ENCODE measurements at regions of chr5 and their contacts with region 1.

Region 1: GRCh38 chr5:172188033-172188892 is at the start of gene STK10:
- DNase-seq: peak; percentile 79 to 95 (median 89)
- ATAC-seq: peak; percentile 75
- H3K4me3 ChIP-seq: peak within 1 kb of the TSS; percentile 74 to 95
- H3K4me3 Mint-ChIP-seq: peak within 1 kb of the TSS; percentile 100
- H3K27ac ChIP-seq: peak within 1 kb of the TSS; percentile 84 to 97
- H3K27ac Mint-ChIP-seq: peak within 1 kb of the TSS; percentile 99
- H3K4me1 ChIP-seq: peaks cover 14% of the 10 kb centered on the region
- H3K4me1 Mint-ChIP-seq: peaks cover 32% of the 10 kb centered on the region
- H3K27me3 ChIP-seq: no peaks in the 10 kb centered on the region
- H3K27me3 Mint-ChIP-seq: no peaks in the 10 kb centered on the region
- CTCF ChIP-seq: peak; percentile 97
- total RNA-seq, gene STK10: 172 to 182 TPM

Region 2: GRCh38 chr5:171387345-171387969 is 800.8 kb before region 1 on chr5 and contains the start of gene NPM1:
- CTCF ChIA-PET with region 1: no interaction called
- POLR2A ChIA-PET with region 1: no interaction called
- intact Hi-C with region 1: loop called (anchors 5 kb)
- DNase-seq: peak; percentile 95 to 100 (median 97)
- ATAC-seq: peak; percentile 88
- H3K4me3 ChIP-seq: peak within 1 kb of the TSS; percentile 92 to 96
- H3K4me3 Mint-ChIP-seq: peak within 1 kb of the TSS; percentile 96
- H3K27ac ChIP-seq: peak within 1 kb of the TSS; percentile 94 to 97
- H3K27ac Mint-ChIP-seq: peak within 1 kb of the TSS; percentile 99
- H3K4me1 ChIP-seq: peaks cover 45% of the 10 kb centered on the region
- H3K4me1 Mint-ChIP-seq: peaks cover 46% of the 10 kb centered on the region
- H3K27me3 ChIP-seq: no peaks in the 10 kb centered on the region
- H3K27me3 Mint-ChIP-seq: peaks cover 3% of the 10 kb centered on the region
- CTCF ChIP-seq: no peak
- total RNA-seq, gene NPM1: 1,297 to 1,299 TPM

Region 3: DNA sequence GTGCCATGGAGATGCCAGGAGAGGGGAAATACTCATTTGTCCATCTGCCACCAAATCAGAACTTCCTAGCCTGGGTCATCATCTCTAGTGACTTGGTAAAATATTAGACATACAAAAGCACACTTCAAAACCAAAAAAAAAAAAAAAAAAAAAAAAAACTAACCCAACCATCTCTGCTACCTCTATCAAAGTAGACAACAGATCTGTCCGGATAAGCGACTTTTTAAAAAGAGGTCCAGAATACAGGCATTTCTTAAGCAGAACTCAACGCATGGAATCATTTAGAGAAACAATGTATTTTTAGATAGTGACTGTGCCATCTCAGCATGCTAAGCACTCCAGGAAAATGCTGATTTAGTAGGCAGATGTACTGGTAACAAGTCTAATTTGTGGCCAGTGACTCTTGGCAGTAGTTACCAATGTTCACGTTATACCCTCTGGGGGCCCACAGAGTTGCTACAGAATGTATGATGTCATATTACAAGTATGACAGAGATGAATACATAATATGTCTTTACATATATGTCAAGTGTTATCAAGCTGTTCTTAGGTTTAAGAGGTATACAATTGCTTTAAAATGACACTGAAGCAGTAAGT is 294.9 kb before region 1 on chr5:
- CTCF ChIA-PET with region 1: no interaction called
- POLR2A ChIA-PET with region 1: no interaction called
- intact Hi-C with region 1: no loop called
- DNase-seq: no peak
- ATAC-seq: no peak
- H3K4me3 ChIP-seq: no peak overlapping the region
- H3K4me3 Mint-ChIP-seq: no peak overlapping the region
- H3K27ac ChIP-seq: no peak overlapping the region
- H3K27ac Mint-ChIP-seq: no peak overlapping the region
- H3K4me1 ChIP-seq: peaks cover 11% of the 10 kb centered on the region
- H3K4me1 Mint-ChIP-seq: peaks cover 17% of the 10 kb centered on the region
- H3K27me3 ChIP-seq: no peaks in the 10 kb centered on the region
- H3K27me3 Mint-ChIP-seq: no peaks in the 10 kb centered on the region
- CTCF ChIP-seq: no peak

Region 4: GRCh38 chr5:172059661-172060100 is 128.6 kb before region 1 on chr5:
- CTCF ChIA-PET with region 1: interaction called, 11 read pairs
- POLR2A ChIA-PET with region 1: no interaction called
- intact Hi-C with region 1: no loop called
- DNase-seq: peak in 2 of 9 experiments; percentile 39 to 54
- ATAC-seq: no peak
- H3K4me3 ChIP-seq: no peak overlapping the region
- H3K4me3 Mint-ChIP-seq: no peak overlapping the region
- H3K27ac ChIP-seq: no peak overlapping the region
- H3K27ac Mint-ChIP-seq: peak overlapping the region; percentile 61
- H3K4me1 ChIP-seq: peaks cover 9% of the 10 kb centered on the region
- H3K4me1 Mint-ChIP-seq: peaks cover 30% of the 10 kb centered on the region
- H3K27me3 ChIP-seq: no peaks in the 10 kb centered on the region
- H3K27me3 Mint-ChIP-seq: no peaks in the 10 kb centered on the region
- CTCF ChIP-seq: peak; percentile 43

Region 5: DNA sequence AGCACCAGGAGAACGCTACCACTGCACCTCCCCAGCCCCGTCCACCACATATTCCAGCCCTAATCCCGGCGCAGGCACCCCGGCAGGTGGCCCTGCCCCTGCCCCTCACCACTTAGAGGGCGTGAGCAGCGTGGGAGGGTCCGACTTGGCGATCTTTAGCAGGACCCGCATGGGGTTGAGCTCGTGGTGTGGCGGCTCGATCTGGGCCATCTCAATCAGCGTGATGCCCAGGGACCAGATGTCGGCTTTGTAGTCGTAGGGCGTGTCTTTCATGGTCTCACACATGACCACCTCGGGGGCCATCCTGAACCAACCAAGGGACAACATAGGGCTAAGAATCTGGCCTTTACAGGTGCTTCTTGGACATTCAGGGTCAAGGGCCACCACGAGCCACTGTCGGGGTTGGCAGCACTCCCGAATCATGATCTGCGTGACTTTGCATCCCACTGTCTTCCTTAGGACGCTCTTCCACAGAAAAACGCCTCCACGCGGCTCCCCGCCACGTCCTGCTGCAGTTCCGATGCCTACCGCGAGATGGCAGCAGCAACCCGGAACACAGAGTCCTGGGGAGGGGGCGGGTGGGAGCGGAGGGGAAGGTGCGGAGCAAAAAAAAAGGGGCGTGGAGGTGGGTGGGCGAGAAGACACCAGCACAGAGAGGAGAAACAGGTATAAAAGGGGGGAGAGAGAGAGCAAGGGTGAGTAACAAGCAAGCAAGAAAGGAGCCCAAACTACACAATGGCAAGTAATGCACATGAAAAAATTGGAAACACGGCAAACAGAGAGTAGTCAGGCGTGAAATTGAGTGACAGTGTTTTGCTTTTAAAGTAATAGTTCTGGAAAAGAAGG is 81.5 kb before region 1 on chr5:
- CTCF ChIA-PET with region 1: interaction called, 197 read pairs
- POLR2A ChIA-PET with region 1: interaction called, 82 read pairs
- intact Hi-C with region 1: loop called (anchors 1 kb)
- DNase-seq: peak; percentile 31 to 81 (median 69)
- ATAC-seq: peak; percentile 42
- H3K4me3 ChIP-seq: no peak overlapping the region
- H3K4me3 Mint-ChIP-seq: peak overlapping the region; percentile 8
- H3K27ac ChIP-seq: peak overlapping the region in 1 of 2 experiments; percentile 51
- H3K27ac Mint-ChIP-seq: peak overlapping the region; percentile 84
- H3K4me1 ChIP-seq: peaks cover 36% of the 10 kb centered on the region
- H3K4me1 Mint-ChIP-seq: peaks cover 48% of the 10 kb centered on the region
- H3K27me3 ChIP-seq: no peaks in the 10 kb centered on the region
- H3K27me3 Mint-ChIP-seq: no peaks in the 10 kb centered on the region
- CTCF ChIP-seq: peak; percentile 98

Region 6: DNA sequence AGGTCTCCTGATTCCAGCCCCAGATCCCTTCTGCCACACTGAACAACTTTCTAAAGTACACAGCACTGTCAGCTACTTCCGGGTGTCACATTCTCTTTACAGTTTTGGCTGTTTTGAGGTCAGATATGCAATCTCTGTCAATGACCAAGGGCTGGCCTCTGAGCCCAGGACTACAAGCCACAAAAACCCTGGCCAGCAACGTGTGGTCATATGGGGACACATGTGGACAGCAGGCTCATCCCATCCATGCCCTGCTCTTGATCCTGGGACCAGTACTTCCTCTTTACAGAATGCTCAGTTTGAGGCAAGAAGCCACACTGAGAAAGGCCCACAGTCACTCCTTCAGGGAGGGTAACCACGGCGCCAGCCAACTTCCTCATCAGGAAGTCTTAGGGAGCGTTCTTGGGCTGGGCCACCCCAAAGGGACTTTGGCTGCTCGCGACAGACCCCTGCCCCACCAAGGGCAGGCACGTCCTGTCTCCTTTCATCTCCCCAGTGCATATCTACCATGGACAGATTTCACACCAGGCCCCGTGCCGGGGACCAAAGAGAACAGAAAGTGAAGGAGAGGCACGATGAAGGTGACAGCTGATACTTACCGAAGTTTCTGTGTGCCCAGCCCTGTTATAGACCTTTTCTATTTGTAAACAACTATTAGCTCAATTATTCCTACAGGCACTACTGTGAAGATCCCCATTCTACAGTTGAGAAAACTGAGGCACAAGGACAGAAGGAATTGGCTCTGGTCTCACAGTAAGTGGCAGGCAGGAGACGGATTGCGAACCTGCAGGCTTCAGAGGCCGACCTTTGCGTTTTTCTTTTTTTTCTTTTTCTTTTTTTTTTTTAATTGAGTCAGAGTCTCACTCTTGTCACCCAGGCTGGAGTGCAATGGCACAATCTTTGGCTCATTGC is 37.5 kb before region 1 on chr5:
- CTCF ChIA-PET with region 1: interaction called, 7 read pairs
- POLR2A ChIA-PET with region 1: interaction called, 3 read pairs
- intact Hi-C with region 1: loop called (anchors 1 kb)
- DNase-seq: peak in 6 of 9 experiments; percentile 7 to 61 (median 36)
- ATAC-seq: peak; percentile 58
- H3K4me3 ChIP-seq: peak overlapping the region; percentile 9 to 36
- H3K4me3 Mint-ChIP-seq: peak overlapping the region; percentile 48
- H3K27ac ChIP-seq: peak overlapping the region; percentile 40 to 82
- H3K27ac Mint-ChIP-seq: peak overlapping the region; percentile 86
- H3K4me1 ChIP-seq: peaks cover 71% of the 10 kb centered on the region
- H3K4me1 Mint-ChIP-seq: peaks cover 84% of the 10 kb centered on the region
- H3K27me3 ChIP-seq: no peaks in the 10 kb centered on the region
- H3K27me3 Mint-ChIP-seq: no peaks in the 10 kb centered on the region
- CTCF ChIP-seq: no peak

Region 7: GRCh38 chr5:172697123-172698121 is 509.2 kb after region 1 on chr5:
- CTCF ChIA-PET with region 1: no interaction called
- POLR2A ChIA-PET with region 1: no interaction called
- intact Hi-C with region 1: loop called in 1 of 2 experiments (anchors 5 kb)
- DNase-seq: peak; percentile 67 to 92 (median 84)
- ATAC-seq: peak; percentile 98
- H3K4me3 ChIP-seq: peak overlapping the region; percentile 64 to 90
- H3K4me3 Mint-ChIP-seq: peak overlapping the region; percentile 93
- H3K27ac ChIP-seq: peak overlapping the region; percentile 43 to 81
- H3K27ac Mint-ChIP-seq: peak overlapping the region; percentile 92
- H3K4me1 ChIP-seq: peaks cover 10% of the 10 kb centered on the region
- H3K4me1 Mint-ChIP-seq: peaks cover 22% of the 10 kb centered on the region
- H3K27me3 ChIP-seq: peaks cover 0 to 3% of the 10 kb centered on the region in 2 experiments
- H3K27me3 Mint-ChIP-seq: peaks cover 16% of the 10 kb centered on the region
- CTCF ChIP-seq: peak; percentile 81

Measured in CD8-positive, alpha-beta T cell (primary cell).